Esophagus muscularis mucosa (tissue), 4 donors: ENCODE measurements at regions of chr3 and their contacts with region 1.

Region 1: GRCh38 chr3:132352541-132353143 is 35.4 kb downstream of the ACP3 start:
- DNase-seq: no peak
- H3K4me3 ChIP-seq: no peak overlapping the region
- H3K27ac ChIP-seq: no peak overlapping the region
- H3K4me1 ChIP-seq: peaks cover 0 to 5% (median 0%) of the 10 kb centered on the region in 4 donors
- H3K27me3 ChIP-seq: no peaks in the 10 kb centered on the region
- CTCF ChIP-seq: peak; percentile 89 to 91 (median 90)
- EP300 ChIP-seq: no peak
- POLR2A ChIP-seq: no peak

Region 2: GRCh38 chr3:132456571-132456970 is 103.9 kb after region 1 on chr3:
- intact Hi-C with region 1: loop called (anchors 2 kb)
- DNase-seq: no peak
- H3K4me3 ChIP-seq: no peak overlapping the region
- H3K27ac ChIP-seq: no peak overlapping the region
- H3K4me1 ChIP-seq: no peaks in the 10 kb centered on the region
- H3K27me3 ChIP-seq: no peaks in the 10 kb centered on the region
- CTCF ChIP-seq: no peak
- EP300 ChIP-seq: no peak
- POLR2A ChIP-seq: no peak

Region 3: DNA sequence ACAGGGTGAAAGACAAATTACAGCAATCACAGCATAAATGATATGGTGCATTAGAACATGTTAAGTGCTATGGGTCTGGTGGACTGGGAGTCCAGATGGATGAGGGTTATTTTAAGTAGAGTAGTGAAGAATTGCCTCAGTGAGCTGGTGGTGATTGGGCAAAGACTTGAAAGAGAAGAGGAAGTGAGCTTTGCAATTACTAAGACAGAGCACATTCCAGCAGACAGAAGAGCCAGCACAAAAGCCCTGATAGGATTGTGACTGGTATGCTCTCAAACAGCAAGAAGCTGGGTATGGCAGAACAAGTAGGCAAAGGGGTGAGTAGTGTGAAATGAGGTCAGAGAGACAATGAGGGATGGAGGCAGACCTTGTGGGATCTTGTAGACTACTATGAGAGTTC is 242.4 kb after region 1 on chr3:
- intact Hi-C with region 1: no loop called
- DNase-seq: no peak
- H3K4me3 ChIP-seq: no peak overlapping the region
- H3K27ac ChIP-seq: no peak overlapping the region
- H3K4me1 ChIP-seq: peaks cover 0 to 12% (median 0%) of the 10 kb centered on the region in 4 donors
- H3K27me3 ChIP-seq: no peaks in the 10 kb centered on the region
- CTCF ChIP-seq: no peak
- EP300 ChIP-seq: no peak
- POLR2A ChIP-seq: no peak